ENCODE measurements at regions of chr4 and their contacts with region 1.

Region 1: DNA sequence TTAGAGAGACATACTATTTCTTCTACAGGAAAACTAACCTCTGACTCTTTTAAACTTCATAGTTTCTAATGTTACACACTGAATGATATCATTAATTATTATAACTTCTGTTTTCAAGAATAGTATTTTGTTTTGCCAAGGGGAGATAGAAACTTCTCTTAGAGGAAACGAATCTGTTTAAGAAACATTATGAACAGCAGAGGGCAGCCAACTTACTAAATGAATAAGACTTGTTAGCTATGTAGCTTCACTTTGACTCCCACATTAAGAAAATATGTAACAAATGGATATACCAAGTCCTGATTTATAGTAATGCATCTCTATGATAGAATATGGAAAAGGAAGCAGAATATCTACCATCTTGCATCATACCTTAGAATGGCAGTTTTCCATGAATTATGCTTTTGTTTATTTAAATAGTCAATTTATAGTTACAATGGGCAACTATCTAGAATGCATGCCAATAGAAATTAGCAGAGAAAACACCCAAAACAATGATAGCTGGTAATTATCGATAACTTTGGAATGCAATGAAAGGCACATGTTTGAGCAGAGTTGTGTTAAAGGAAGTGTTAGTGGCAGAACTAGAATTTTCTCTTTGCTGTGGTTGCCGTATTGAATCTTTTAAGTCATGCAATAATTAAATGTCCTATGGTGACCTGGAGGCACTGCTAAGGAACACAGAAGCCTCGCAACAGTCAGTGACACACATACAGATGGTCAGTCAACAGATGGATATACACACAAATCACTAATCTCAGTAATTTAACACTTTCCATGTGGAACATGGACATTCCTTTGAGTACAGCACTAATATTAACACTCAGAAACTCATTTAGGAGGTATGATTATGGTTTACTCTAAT is 105.7 kb upstream of the PDLIM3 start:
- DNase-seq: no peak
- ATAC-seq: peak in 2 of 4 donors; percentile 58 to 77
- H3K4me3 ChIP-seq: no peak overlapping the region
- H3K27ac ChIP-seq: no peak overlapping the region
- H3K4me1 ChIP-seq: peaks cover 8% of the 10 kb centered on the region
- H3K27me3 ChIP-seq: peaks cover 0 to 2% (median 0%) of the 10 kb centered on the region in 3 donors
- CTCF ChIP-seq: peak; percentile 55

Region 2: GRCh38 chr4:186015212-186015785 is 374.3 kb after region 1 on chr4:
- intact Hi-C with region 1: loop called in 1 of 2 experiments (anchors 5 kb)
- DNase-seq: no peak
- ATAC-seq: no peak
- H3K4me3 ChIP-seq: no peak overlapping the region
- H3K27ac ChIP-seq: no peak overlapping the region
- H3K4me1 ChIP-seq: no peaks in the 10 kb centered on the region
- H3K27me3 ChIP-seq: no peaks in the 10 kb centered on the region
- CTCF ChIP-seq: no peak

Region 3: DNA sequence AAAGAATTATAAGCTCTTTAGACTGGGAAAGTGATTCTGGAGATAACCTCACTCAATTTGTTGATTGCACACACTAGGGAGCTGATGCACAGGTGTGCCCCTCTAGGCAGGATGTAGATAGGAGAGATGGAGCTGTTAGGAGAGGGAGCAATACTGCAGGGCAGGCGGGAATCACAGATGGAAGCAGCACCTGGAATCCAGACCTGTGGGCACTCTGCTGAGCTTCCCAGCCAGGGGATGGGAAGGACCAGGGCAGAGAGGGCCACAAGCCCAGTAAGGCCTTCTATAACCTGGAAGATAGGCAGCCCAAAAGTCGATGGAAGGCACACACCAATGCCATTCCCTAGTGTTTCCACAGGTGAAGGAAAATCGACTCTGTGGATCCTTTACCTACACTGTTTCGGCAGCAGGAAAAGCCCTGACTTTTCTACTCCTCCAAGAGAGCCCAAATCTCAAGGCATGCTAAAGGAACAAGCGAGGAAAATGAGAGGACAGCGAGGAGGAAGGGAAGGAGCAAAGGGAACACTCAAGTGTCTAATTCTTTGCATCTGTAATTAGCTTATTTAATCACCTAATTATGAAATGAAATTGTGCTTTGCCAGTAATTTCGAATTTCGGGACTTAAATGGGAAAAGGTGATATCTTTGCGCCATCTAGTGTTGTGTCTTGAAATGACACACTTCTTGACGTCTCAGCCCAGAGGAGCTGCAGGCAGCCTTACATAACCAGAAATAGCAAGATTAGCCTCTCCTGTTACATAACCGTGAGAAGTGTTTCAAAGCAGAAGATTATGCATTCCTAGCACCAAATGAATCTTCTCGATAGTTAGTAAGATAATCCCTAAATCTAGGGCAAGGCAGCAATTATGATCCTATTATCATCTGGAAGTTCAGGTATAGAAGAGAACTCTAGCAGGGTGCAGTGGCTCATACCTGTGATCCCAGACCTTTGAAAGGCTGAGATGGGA is 396.9 kb after region 1 on chr4:
- intact Hi-C with region 1: loop called (anchors 1 to 2 kb)
- DNase-seq: no peak
- ATAC-seq: peak; percentile 73 to 95 (median 81)
- H3K4me3 ChIP-seq: no peak overlapping the region
- H3K27ac ChIP-seq: no peak overlapping the region
- H3K4me1 ChIP-seq: no peaks in the 10 kb centered on the region
- H3K27me3 ChIP-seq: no peaks in the 10 kb centered on the region
- CTCF ChIP-seq: peak; percentile 90

Measured in psoas muscle (tissue), 8 donors.